ENCODE measurements at regions of chrX and their contacts with region 1.

Region 1: DNA sequence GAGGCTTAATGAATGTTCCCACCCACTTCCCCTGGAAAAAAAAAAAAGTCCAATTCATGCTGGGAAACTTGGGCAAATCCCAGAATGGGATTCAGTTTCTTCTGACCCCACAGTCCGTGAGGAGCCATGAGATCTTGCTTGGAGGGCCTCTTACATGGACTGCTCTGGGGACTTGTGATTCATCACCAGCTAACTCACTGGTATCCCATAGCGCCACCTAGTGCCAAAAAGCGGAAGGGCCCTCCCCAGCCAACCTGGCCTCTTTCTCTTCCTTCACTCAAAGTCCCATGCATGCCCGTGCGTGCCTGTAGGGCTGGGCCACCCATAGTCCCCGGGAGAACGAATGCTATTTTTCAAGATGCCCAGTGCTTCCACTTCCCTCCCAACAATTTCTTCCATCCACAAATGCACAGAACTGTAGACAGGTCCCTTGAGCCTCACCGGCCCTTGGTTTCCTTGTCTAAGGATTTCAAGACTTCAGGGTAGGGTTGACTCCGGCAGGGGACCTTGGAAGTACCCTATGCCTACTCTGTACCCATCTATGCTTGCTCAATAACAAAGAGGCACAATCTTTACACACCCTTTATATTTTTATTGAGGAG is 5.1 kb downstream of the RTL5 start:
- DNase-seq: peak; percentile 82
- H3K4me3 ChIP-seq: no peak overlapping the region; a peak in 1 of 4 replicates
- H3K27ac ChIP-seq: peak overlapping the region in 1 of 2 experiments; percentile 93; a peak in 2 of 4 replicates
- H3K4me1 ChIP-seq: peaks cover 14 to 80% of the 10 kb centered on the region in 2 experiments; a peak in 3 of 4 replicates
- H3K27me3 ChIP-seq: peaks cover 5% of the 10 kb centered on the region; the same call in 1 of the 2 replicates
- CTCF ChIP-seq: peak; percentile 95
- EP300 ChIP-seq: no peak
- RAD21 ChIP-seq: peak; percentile 95

Region 2: DNA sequence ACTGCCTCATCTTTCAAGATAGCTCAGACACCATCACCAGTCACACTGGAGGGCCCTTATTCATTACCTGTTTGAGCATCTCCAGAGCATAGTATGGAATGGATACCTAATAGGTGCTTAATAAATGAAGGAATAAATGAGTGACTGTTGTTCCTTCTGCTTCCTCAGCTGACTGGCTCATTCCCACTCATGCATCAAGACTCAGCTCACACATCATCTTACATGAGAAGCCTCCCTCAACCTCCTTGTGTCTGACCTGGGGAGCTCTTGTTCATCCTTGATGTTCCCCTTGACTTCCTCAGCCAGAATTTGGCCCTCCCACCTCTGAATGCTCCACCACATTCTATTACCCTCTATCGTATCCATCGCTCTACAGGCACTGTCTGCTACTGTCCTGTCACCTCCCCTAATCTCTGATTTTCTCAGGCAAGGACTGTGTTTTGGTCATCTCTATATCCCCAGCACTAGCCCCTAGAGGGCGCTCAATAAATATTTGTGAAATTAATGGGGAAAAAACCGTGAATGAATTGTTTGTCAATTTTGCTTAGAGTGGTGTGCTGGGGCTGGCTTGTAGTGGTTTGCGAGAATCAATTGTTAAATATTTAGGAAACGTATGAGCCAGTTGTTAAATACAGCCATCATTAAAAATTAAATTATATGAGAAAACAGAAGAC is 127.7 kb before region 1 on chrX:
- CTCF ChIA-PET with region 1: interaction called, 59 read pairs
- POLR2A ChIA-PET with region 1: no interaction called
- DNase-seq: peak; percentile 76
- H3K4me3 ChIP-seq: no peak overlapping the region; a peak in 1 of 4 replicates
- H3K27ac ChIP-seq: no peak overlapping the region
- H3K4me1 ChIP-seq: peaks cover 0 to 3% of the 10 kb centered on the region in 2 experiments; a peak in 1 of 4 replicates
- H3K27me3 ChIP-seq: peaks cover 5% of the 10 kb centered on the region; the same call in 1 of the 2 replicates
- CTCF ChIP-seq: peak; percentile 88
- EP300 ChIP-seq: no peak
- RAD21 ChIP-seq: peak; percentile 81

Region 3: GRCh38 chrX:72029483-72030411 is 96.9 kb before region 1 on chrX:
- CTCF ChIA-PET with region 1: interaction called, 257 read pairs
- POLR2A ChIA-PET with region 1: interaction called, 5 read pairs
- DNase-seq: peak; percentile 47
- H3K4me3 ChIP-seq: peak overlapping the region in 1 of 2 experiments; percentile 40; a peak in 1 of 4 replicates
- H3K27ac ChIP-seq: peak overlapping the region; percentile 61 to 78
- H3K4me1 ChIP-seq: peaks cover 18 to 33% of the 10 kb centered on the region in 2 experiments
- H3K27me3 ChIP-seq: 0 out of 2 replicates have a peak, but pooled peaks cover 9% of the 10 kb centered on the region
- CTCF ChIP-seq: no peak
- EP300 ChIP-seq: peak; percentile 57 to 90
- RAD21 ChIP-seq: no peak

Region 4: GRCh38 chrX:72079607-72080006 is 47.0 kb before region 1 on chrX:
- CTCF ChIA-PET with region 1: interaction called, 46 read pairs
- POLR2A ChIA-PET with region 1: interaction called, 11 read pairs
- DNase-seq: no peak
- H3K4me3 ChIP-seq: no peak overlapping the region
- H3K27ac ChIP-seq: peak overlapping the region in 1 of 2 experiments; percentile 95; a peak in 2 of 4 replicates
- H3K4me1 ChIP-seq: peaks cover 0 to 66% of the 10 kb centered on the region in 2 experiments; a peak in 2 of 4 replicates
- H3K27me3 ChIP-seq: peaks cover 5% of the 10 kb centered on the region
- CTCF ChIP-seq: no peak
- EP300 ChIP-seq: no peak
- RAD21 ChIP-seq: no peak

Region 5: GRCh38 chrX:72137846-72138495 is 11.3 kb after region 1 on chrX:
- CTCF ChIA-PET with region 1: interaction called, 10 read pairs
- POLR2A ChIA-PET with region 1: interaction called, 8 read pairs
- DNase-seq: no peak
- H3K4me3 ChIP-seq: no peak overlapping the region
- H3K27ac ChIP-seq: no peak overlapping the region
- H3K4me1 ChIP-seq: peaks cover 0 to 6% of the 10 kb centered on the region in 2 experiments; a peak in 2 of 4 replicates
- H3K27me3 ChIP-seq: peaks cover 8% of the 10 kb centered on the region; the same call in 1 of the 2 replicates
- CTCF ChIP-seq: no peak
- EP300 ChIP-seq: no peak
- RAD21 ChIP-seq: no peak

Measured in SK-N-SH (cell line).